ENCODE measurements at regions of chr20 and their contacts with region 1.

Region 1: GRCh38 chr20:53578492-53579222 is 15.0 kb downstream of the ZNF217 start:
- DNase-seq: peak; percentile 91
- H3K4me3 Mint-ChIP-seq: peak overlapping the region; percentile 54
- H3K27ac Mint-ChIP-seq: peak overlapping the region; percentile 90
- H3K4me1 Mint-ChIP-seq: peaks cover 30% of the 10 kb centered on the region
- H3K27me3 Mint-ChIP-seq: no peaks in the 10 kb centered on the region
- CTCF ChIP-seq: peak; percentile 92

Region 2: DNA sequence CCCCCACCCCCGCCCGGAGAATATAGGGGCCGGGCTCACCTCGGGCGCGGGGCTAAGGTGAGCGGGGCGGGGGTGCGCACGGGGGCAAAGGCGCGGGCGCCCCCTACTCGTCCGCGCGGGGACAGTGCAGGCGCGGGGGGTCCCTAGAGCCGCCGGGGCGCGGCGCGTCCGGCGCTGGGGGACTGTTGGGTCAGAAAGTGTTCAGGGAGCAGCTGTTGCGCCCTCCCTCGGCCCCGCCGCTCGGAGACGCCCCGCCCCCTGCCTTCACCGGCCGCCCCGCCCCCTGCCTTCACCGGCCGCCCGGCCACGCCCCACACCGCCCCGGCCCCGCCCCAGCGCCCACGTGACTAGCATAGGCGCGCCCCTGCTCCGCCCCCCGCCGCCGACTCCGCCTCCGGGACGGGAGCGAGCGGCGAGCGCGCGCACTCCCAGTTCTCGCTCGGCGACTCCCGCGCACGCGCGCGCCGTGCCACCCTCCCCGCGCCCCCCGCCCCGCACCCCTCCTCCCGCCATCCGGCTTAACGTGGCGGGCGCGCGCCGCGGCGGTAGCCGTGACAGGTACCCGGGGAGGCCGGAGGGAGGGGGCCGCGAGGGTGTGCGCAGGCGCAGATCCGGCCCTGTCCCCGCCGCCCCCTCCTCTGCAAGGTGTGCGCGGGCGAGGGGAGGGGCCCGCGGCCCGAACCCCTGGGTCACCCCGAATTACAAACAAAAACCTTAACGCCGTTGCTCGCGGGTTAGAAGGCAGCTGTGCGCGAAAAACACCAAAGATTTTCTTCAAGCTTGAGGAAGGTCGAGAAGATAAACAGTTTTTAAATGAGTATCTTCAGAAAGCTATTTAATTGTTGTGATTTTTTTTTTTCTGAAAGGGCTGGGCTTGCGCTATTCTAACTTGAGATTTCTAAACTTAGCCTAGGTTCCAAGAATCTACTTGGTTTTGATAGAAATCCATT is 15.7 kb after region 1 on chr20:
- CTCF ChIA-PET with region 1: interaction called, 6 read pairs
- POLR2A ChIA-PET with region 1: interaction called, 107 read pairs
- intact Hi-C with region 1: no loop called
- DNase-seq: peak; percentile 90
- H3K4me3 Mint-ChIP-seq: peak overlapping the region; percentile 82
- H3K27ac Mint-ChIP-seq: peak overlapping the region; percentile 93
- H3K4me1 Mint-ChIP-seq: peaks cover 29% of the 10 kb centered on the region
- H3K27me3 Mint-ChIP-seq: no peaks in the 10 kb centered on the region
- CTCF ChIP-seq: peak; percentile 23

Region 3: DNA sequence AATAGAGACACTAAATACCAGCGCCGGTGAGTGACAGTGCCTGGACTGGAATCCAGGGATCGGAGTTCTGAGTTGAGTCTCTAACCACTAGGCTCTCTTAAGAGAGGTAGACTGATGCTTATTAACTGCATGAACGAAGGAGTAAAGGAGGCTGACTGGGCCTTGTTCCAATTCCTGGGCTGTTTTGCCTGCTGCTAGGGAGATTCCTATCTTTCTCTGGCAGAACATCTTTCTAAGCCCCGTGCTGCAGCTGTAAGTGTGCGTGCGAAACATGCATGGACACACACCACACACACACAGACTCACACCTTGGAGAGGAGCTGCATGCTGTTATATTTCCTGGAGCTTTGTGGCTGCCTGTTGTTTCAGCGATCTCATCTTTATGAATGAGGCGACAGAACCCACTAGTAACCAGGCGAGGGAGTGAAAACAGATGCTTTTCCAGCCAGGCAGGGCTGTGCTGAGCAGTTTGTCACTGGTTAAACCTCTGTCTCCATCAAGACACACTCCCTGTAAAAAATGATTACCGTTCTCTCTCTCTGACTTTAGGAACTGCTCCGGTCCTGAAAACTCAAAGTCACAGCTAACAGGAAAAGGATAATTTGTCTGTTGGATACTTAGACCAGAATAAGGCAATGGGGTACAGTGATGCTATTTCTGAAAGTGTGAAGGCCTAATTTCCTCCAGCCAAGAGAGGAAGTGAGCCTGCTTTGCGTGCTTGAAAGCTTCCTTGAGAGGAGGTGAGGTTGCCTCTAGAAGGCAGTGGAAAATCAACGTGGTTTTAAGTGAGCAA is 172.4 kb after region 1 on chr20:
- CTCF ChIA-PET with region 1: interaction called, 6 read pairs
- POLR2A ChIA-PET with region 1: interaction called, 6 read pairs
- intact Hi-C with region 1: loop called (anchors 5 kb)
- DNase-seq: no peak
- H3K4me3 Mint-ChIP-seq: no peak overlapping the region
- H3K27ac Mint-ChIP-seq: peak overlapping the region; percentile 83
- H3K4me1 Mint-ChIP-seq: peaks cover 29% of the 10 kb centered on the region
- H3K27me3 Mint-ChIP-seq: no peaks in the 10 kb centered on the region
- CTCF ChIP-seq: no peak

Region 4: GRCh38 chr20:53899351-53900167 is 320.9 kb after region 1 on chr20:
- CTCF ChIA-PET with region 1: interaction called, 5 read pairs
- POLR2A ChIA-PET with region 1: interaction called, 18 read pairs
- intact Hi-C with region 1: no loop called
- DNase-seq: peak; percentile 89
- H3K4me3 Mint-ChIP-seq: peak overlapping the region; percentile 39
- H3K27ac Mint-ChIP-seq: peak overlapping the region; percentile 75
- H3K4me1 Mint-ChIP-seq: peaks cover 27% of the 10 kb centered on the region
- H3K27me3 Mint-ChIP-seq: no peaks in the 10 kb centered on the region
- CTCF ChIP-seq: no peak

Region 5: GRCh38 chr20:53926428-53927028 is 347.9 kb after region 1 on chr20:
- CTCF ChIA-PET with region 1: interaction called, 11 read pairs
- POLR2A ChIA-PET with region 1: interaction called, 18 read pairs
- intact Hi-C with region 1: no loop called
- DNase-seq: peak; percentile 97
- H3K4me3 Mint-ChIP-seq: peak overlapping the region; percentile 8
- H3K27ac Mint-ChIP-seq: peak overlapping the region; percentile 92
- H3K4me1 Mint-ChIP-seq: peaks cover 24% of the 10 kb centered on the region
- H3K27me3 Mint-ChIP-seq: no peaks in the 10 kb centered on the region
- CTCF ChIP-seq: no peak

Region 6: GRCh38 chr20:54062812-54063280 is 484.2 kb after region 1 on chr20:
- CTCF ChIA-PET with region 1: interaction called, 48 read pairs
- POLR2A ChIA-PET with region 1: interaction called, 19 read pairs
- intact Hi-C with region 1: loop called (anchors 1 kb)
- DNase-seq: peak; percentile 64
- H3K4me3 Mint-ChIP-seq: no peak overlapping the region
- H3K27ac Mint-ChIP-seq: no peak overlapping the region
- H3K4me1 Mint-ChIP-seq: peaks cover 21% of the 10 kb centered on the region
- H3K27me3 Mint-ChIP-seq: no peaks in the 10 kb centered on the region
- CTCF ChIP-seq: peak; percentile 59

Measured in MCF 10A (cell line).